Posterior vena cava (tissue), 2 donors: ENCODE measurements at regions of chr11 and their contacts with region 1.

Region 1: DNA sequence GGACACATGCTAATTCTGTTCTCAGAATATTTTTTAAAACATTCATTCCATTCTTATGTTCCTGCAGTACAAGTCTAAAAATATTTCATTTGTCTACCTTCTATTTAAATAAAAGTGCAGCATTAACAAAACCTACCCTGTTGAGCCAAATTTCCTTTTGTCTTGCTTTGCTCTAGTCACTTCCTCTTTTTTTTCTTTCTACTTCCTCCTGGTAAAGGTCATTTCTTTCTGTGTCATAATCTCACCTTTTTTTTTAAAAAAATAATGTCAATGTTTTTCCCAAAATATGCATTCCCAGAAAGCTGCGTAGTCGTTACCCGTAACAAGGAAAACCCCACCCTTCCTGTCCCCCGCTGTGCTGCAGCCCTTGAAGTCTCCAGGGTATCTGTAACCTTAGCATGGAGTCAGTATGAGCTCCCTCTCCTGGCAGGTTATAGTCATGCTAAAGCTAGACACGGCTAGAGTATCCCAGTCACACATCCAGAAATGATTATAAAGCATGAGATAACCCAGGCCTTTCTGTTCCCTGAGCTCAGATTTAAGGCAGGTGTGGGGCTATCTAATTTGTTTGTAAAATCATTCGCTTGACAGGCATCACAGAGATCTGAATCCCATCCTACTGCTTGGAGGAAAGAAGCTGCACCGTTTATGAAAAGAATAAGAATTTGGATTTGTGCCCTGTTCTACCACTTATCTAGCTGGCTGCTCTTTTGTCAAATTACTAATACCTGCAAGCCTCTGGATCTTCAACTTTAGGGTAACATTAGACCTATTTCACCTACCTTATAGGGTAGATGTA is 51.1 kb upstream of the EED start:
- DNase-seq: peak; percentile 85

Region 2: DNA sequence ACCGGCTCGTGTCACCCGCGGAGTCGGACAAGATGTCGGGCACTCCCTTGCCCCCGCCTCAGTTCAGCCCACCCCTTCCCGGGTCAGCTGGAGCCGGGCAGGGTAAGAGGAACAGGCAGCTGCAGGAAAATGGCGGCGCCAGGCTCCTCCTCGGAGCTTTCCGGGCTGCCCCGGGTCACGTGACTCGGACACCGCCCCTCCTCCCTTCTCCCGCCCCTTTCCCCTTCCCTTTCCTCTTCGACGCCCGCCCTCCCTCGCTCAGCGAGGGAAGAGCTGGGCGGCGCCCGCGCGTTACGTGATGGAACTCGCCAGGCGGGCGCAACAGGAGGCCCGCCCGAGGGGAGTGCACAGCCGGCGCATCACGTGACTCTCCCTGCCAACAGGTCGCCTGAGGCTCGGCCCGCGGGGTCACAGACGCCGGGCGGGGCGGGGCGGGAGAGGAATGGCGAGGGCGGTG is 124.5 kb before region 1 on chr11 and contains the start of gene PICALM:
- intact Hi-C with region 1: loop called in 1 of 2 experiments (anchors 10 kb)
- DNase-seq: peak; percentile 99
- total RNA-seq, gene PICALM: 237 to 371 TPM

Region 3: DNA sequence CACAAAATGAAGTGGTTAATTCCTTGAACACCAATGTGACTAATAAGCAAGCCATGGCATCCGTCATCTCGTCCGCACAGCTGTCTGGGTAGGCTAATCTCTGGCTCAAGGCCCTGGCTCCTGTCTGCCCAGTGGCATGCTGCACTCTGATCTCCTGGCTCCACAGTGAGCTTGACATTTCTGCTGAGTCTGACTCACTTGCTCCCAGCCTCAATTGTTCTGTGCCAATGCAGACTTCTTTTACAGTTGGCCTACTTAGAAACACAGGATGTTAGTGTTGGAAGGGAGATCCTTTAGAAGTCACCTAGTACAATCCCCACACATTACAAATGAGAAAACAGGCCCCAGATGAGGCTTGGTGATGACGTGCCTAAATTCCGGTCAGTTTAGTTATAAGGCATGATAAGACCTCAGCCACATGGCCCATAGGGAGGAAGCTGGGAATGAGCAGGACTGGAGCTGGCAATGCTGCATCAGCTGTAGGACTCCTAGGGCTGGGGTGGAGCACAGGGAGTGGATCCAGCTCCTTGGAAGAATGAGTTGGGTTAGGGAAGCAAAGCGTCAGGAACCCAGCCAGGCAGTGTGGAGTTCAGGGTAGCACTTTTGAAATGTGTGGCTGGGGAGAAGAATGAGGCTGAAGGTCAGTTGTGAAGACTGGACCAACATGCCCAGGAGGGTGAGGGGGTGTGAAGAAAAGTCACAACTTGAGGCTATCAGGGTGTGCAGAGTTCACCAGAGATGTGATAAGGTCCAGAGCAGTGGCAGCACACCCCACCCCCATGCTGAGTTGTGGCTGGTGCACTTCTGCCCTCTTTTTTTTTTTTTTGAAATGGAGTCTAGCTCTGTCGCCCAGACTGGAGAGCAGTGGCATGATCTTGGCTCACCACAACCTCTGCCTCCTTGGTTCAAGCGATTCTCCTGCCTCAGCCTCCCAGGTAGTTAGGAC is 19.1 kb before region 1 on chr11:
- intact Hi-C with region 1: loop called in 1 of 2 experiments (anchors 2 kb)
- DNase-seq: peak; percentile 95

Region 4: GRCh38 chr11:86255896-86256295 is 62.4 kb after region 1 on chr11:
- intact Hi-C with region 1: no loop called
- DNase-seq: no peak

Region 5: DNA sequence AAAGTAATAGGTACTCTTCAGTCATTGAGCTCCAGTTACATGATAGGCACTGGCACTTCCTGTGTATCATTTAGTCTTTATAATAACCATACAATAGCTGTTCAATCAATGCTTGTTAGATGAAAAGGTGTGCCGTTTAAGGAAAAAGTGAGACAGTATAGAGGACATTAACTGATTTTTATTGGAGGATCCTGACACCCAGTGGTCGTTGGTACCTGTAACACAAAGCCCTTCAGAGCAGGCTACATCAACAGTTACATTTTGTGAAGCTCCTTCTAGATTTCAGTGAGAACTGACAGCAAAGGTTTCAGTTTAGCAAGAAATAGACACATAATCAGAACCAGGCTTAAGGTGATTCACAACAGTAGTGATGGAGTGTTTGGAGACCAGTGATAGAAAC is 225.4 kb after region 1 on chr11:
- intact Hi-C with region 1: no loop called
- DNase-seq: no peak